ENCODE measurements at regions of chr14 and their contacts with region 1.

Region 1: GRCh38 chr14:50773632-50774541 is 57.1 kb downstream of the NIN start:
- DNase-seq: peak; percentile 60
- H3K4me3 ChIP-seq: no peak overlapping the region
- H3K27ac ChIP-seq: peak overlapping the region; percentile 71
- H3K4me1 ChIP-seq: peaks cover 33% of the 10 kb centered on the region
- H3K27me3 ChIP-seq: no peaks in the 10 kb centered on the region
- CTCF ChIP-seq: peak; percentile 83 to 84
- POLR2A ChIP-seq: no peak

Region 2: GRCh38 chr14:50542941-50543418 is 230.9 kb before region 1 on chr14:
- CTCF ChIA-PET with region 1: interaction called, 14 read pairs
- POLR2A ChIA-PET with region 1: no interaction called
- dilution Hi-C with region 1: no loop called
- intact Hi-C with region 1: loop called (anchors 1 kb)
- DNase-seq: peak; percentile 68
- H3K4me3 ChIP-seq: no peak overlapping the region
- H3K27ac ChIP-seq: no peak overlapping the region
- H3K4me1 ChIP-seq: no peaks in the 10 kb centered on the region
- H3K27me3 ChIP-seq: peaks cover 0 to 11% of the 10 kb centered on the region in 2 experiments
- CTCF ChIP-seq: peak; percentile 24 to 47
- POLR2A ChIP-seq: no peak

Region 3: DNA sequence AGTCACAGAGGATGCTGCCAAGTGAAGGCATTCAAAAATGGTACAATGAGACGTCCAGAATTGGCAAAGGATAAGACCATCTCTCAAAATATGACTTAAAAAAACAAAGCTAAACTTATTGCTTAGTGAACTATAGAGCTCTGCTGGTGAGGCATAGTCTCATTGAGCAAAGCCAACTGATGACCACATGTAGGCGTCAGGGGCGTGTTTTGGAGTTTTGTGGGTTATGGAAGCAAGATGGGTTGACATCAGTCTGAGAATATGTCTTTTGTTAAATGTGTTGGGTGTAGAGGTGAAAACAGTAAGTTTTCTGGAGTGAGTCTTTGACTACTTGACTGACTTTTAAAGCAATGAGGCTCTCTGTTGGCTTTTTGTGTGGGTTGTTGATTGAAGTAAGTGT is 166.7 kb before region 1 on chr14:
- CTCF ChIA-PET with region 1: interaction called, 27 read pairs
- POLR2A ChIA-PET with region 1: no interaction called
- dilution Hi-C with region 1: no loop called
- intact Hi-C with region 1: no loop called
- DNase-seq: no peak
- H3K4me3 ChIP-seq: no peak overlapping the region
- H3K27ac ChIP-seq: no peak overlapping the region
- H3K4me1 ChIP-seq: peaks cover 16% of the 10 kb centered on the region
- H3K27me3 ChIP-seq: no peaks in the 10 kb centered on the region
- CTCF ChIP-seq: no peak
- POLR2A ChIP-seq: no peak

Region 4: DNA sequence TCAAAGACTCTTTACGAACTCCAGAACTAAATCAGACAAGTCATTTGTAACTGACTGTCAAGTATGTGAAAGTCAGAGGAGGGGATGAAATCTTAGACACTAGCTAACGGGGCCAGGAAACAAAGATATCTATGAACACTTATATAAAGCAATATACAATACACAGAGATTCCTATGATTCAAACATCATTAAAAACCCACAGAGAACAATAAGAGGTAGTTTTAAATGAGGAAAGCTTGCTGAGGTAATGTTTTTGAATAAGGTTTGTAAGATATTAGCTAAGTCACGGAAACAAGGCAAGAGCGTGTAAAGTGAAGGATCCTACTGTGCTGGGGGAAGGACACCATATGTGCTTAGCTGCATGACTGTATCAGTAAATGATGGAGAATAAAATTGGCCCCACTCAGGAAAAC is 142.5 kb before region 1 on chr14:
- CTCF ChIA-PET with region 1: no interaction called
- POLR2A ChIA-PET with region 1: no interaction called
- dilution Hi-C with region 1: no loop called
- intact Hi-C with region 1: no loop called
- DNase-seq: no peak
- H3K4me3 ChIP-seq: no peak overlapping the region
- H3K27ac ChIP-seq: no peak overlapping the region
- H3K4me1 ChIP-seq: peaks cover 2% of the 10 kb centered on the region
- H3K27me3 ChIP-seq: no peaks in the 10 kb centered on the region
- CTCF ChIP-seq: no peak
- POLR2A ChIP-seq: no peak

Region 5: GRCh38 chr14:50667996-50668825 is 105.7 kb before region 1 on chr14 and contains the start of gene SAV1:
- CTCF ChIA-PET with region 1: interaction called, 5 read pairs
- POLR2A ChIA-PET with region 1: no interaction called
- dilution Hi-C with region 1: no loop called
- intact Hi-C with region 1: loop called (anchors 5 kb)
- DNase-seq: peak; percentile 82
- H3K4me3 ChIP-seq: peak within 1 kb of the TSS; percentile 70 to 85 (median 81)
- H3K27ac ChIP-seq: peak within 1 kb of the TSS; percentile 81
- H3K4me1 ChIP-seq: peaks cover 23% of the 10 kb centered on the region
- H3K27me3 ChIP-seq: no peaks in the 10 kb centered on the region
- CTCF ChIP-seq: no peak
- POLR2A ChIP-seq: peak; percentile 99
- total RNA-seq, gene SAV1: 27.8 and 31.0 TPM in 2 replicates

Region 6: GRCh38 chr14:50785457-50786063 is 11.7 kb after region 1 on chr14:
- CTCF ChIA-PET with region 1: interaction called, 52 read pairs
- POLR2A ChIA-PET with region 1: no interaction called
- dilution Hi-C with region 1: no loop called
- intact Hi-C with region 1: no loop called
- DNase-seq: no peak
- H3K4me3 ChIP-seq: no peak overlapping the region
- H3K27ac ChIP-seq: no peak overlapping the region
- H3K4me1 ChIP-seq: peaks cover 19% of the 10 kb centered on the region
- H3K27me3 ChIP-seq: no peaks in the 10 kb centered on the region
- CTCF ChIP-seq: no peak
- POLR2A ChIP-seq: no peak

Region 7: GRCh38 chr14:50830932-50831725 is 57.2 kb after region 1 on chr14 and contains the start of gene NIN:
- CTCF ChIA-PET with region 1: interaction called, 22 read pairs
- POLR2A ChIA-PET with region 1: no interaction called
- dilution Hi-C with region 1: no loop called
- intact Hi-C with region 1: no loop called
- DNase-seq: peak; percentile 71
- H3K4me3 ChIP-seq: peak within 1 kb of the TSS; percentile 67 to 92 (median 69)
- H3K27ac ChIP-seq: peak within 1 kb of the TSS; percentile 61
- H3K4me1 ChIP-seq: peaks cover 20% of the 10 kb centered on the region
- H3K27me3 ChIP-seq: no peaks in the 10 kb centered on the region
- CTCF ChIP-seq: no peak
- POLR2A ChIP-seq: peak; percentile 60
- total RNA-seq, gene NIN: 68.2 and 76.3 TPM in 2 replicates

Measured in endothelial cell of umbilical vein (primary cell).